ENCODE measurements at regions of chr5 and their contacts with region 1.

Region 1: DNA sequence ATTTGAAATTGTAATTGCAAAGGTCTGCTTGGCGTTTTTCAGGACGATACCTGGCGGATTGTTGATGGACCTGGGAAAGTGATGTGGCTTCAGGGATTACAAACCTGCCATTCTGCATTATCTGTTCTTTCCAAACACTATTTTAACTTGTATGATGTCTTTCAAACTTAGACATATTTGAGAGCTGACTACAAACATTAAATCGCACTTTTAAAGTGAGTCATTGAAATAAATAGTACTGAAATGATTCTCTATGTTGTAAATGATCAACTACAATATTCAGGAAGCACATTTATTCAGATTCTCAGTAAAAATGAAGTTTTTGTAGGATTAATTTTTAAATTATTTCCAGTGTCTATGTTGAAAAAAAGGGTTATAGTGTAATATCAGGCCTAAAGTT is 32.3 kb upstream of the TMEM171 start:
- DNase-seq: no peak
- ATAC-seq: no peak

Region 2: GRCh38 chr5:73534011-73534644 is 446.1 kb after region 1 on chr5:
- intact Hi-C with region 1: loop called in 1 of 2 experiments (anchors 10 kb)
- DNase-seq: no peak
- ATAC-seq: no peak

Measured in left cardiac atrium (tissue), 4 donors.